AG04449 (cell line): ENCODE measurements at regions of chr12 and their contacts with region 1.

Region 1: GRCh38 chr12:12334367-12335040 is 15.5 kb downstream of the MANSC1 start:
- DNase-seq: no peak
- H3K4me3 ChIP-seq: no peak overlapping the region
- CTCF ChIP-seq: peak; percentile 73

Region 2: DNA sequence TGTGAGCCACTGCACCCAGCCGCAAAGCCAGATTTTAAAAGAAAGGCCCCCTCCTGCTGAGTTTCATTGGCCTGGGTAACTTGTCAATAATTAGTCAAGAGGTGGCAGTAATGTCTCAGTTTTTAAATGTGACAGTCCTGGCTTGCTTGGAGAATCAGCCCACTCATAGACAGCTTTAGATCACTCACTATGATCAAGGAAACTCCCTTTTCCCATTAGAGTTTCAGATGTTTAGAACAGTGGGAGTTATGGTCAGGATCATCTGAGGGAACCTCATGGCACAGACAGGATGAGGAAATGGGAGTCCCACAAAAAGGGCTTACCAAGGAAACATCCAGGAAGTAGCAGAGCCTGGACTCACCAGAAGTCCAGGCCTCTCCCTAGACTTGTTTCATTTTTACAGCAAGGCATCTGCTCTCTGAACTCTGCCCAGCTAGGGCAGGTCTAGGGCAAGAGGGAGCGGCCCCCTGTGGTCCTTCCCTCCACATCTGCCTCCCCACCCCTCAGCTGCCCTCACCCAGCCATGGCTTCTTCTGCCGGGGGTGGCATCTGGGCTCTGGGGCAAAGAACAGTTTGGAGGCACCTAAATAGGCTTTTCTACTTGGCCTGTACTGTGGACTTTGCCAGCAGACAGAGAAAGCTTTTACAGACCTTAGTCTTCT is 252.5 kb before region 1 on chr12:
- CTCF ChIA-PET with region 1: interaction called, 110 read pairs
- POLR2A ChIA-PET with region 1: no interaction called
- DNase-seq: no peak
- H3K4me3 ChIP-seq: no peak overlapping the region
- CTCF ChIP-seq: no peak

Region 3: GRCh38 chr12:12123036-12123604 is 211.4 kb before region 1 on chr12:
- CTCF ChIA-PET with region 1: no interaction called
- POLR2A ChIA-PET with region 1: no interaction called
- DNase-seq: no peak
- H3K4me3 ChIP-seq: no peak overlapping the region
- CTCF ChIP-seq: no peak

Region 4: GRCh38 chr12:12349711-12350665 is 15.5 kb after region 1 on chr12 and contains the start of gene MANSC1:
- CTCF ChIA-PET with region 1: interaction called, 18 read pairs
- POLR2A ChIA-PET with region 1: no interaction called
- DNase-seq: no peak
- H3K4me3 ChIP-seq: peak within 1 kb of the TSS; percentile 63
- CTCF ChIP-seq: peak; percentile 41